ENCODE measurements at regions of chr2 and their contacts with region 1.

Region 1: GRCh38 chr2:172710584-172711024 is 25.0 kb upstream of the RAPGEF4 start:
- DNase-seq: no peak
- H3K4me3 ChIP-seq: no peak overlapping the region
- H3K27ac ChIP-seq: no peak overlapping the region
- H3K4me1 ChIP-seq: no peaks in the 10 kb centered on the region
- H3K27me3 ChIP-seq: peaks cover 0 to 10% (median 0%) of the 10 kb centered on the region in 4 donors
- CTCF ChIP-seq: peak; percentile 21 to 78 (median 56)
- POLR2A ChIP-seq: no peak

Region 2: GRCh38 chr2:172596776-172597175 is 113.8 kb before region 1 on chr2:
- intact Hi-C with region 1: loop called (anchors 10 kb)
- DNase-seq: no peak
- H3K4me3 ChIP-seq: no peak overlapping the region
- H3K27ac ChIP-seq: no peak overlapping the region
- H3K4me1 ChIP-seq: no peaks in the 10 kb centered on the region
- H3K27me3 ChIP-seq: no peaks in the 10 kb centered on the region
- CTCF ChIP-seq: no peak
- POLR2A ChIP-seq: no peak